Mammary epithelial cell (primary cell): ENCODE measurements at regions of chr14 and their contacts with region 1.

Region 1: GRCh38 chr14:104593241-104593701 is 11.3 kb downstream of the TMEM179 start:
- DNase-seq: no peak
- H3K4me3 ChIP-seq: no peak overlapping the region
- H3K27ac ChIP-seq: no peak overlapping the region
- H3K4me1 ChIP-seq: no peaks in the 10 kb centered on the region
- H3K27me3 ChIP-seq: no peaks in the 10 kb centered on the region
- CTCF ChIP-seq: no peak

Region 2: GRCh38 chr14:104085030-104085888 is 508.0 kb before region 1 on chr14 and contains the start of gene ASPG:
- CTCF ChIA-PET with region 1: no interaction called
- dilution Hi-C with region 1: loop called (anchors 5 kb)
- in situ Hi-C with region 1: no loop called
- intact Hi-C with region 1: no loop called
- DNase-seq: no peak
- H3K4me3 ChIP-seq: no peak within 1 kb of the TSS
- H3K27ac ChIP-seq: no peak within 1 kb of the TSS
- H3K4me1 ChIP-seq: no peaks in the 10 kb centered on the region
- H3K27me3 ChIP-seq: peaks cover 11% of the 10 kb centered on the region
- CTCF ChIP-seq: no peak
- total RNA-seq, gene ASPG: 0.09 TPM in 1 of 2 donors, not detected in the other

Region 3: DNA sequence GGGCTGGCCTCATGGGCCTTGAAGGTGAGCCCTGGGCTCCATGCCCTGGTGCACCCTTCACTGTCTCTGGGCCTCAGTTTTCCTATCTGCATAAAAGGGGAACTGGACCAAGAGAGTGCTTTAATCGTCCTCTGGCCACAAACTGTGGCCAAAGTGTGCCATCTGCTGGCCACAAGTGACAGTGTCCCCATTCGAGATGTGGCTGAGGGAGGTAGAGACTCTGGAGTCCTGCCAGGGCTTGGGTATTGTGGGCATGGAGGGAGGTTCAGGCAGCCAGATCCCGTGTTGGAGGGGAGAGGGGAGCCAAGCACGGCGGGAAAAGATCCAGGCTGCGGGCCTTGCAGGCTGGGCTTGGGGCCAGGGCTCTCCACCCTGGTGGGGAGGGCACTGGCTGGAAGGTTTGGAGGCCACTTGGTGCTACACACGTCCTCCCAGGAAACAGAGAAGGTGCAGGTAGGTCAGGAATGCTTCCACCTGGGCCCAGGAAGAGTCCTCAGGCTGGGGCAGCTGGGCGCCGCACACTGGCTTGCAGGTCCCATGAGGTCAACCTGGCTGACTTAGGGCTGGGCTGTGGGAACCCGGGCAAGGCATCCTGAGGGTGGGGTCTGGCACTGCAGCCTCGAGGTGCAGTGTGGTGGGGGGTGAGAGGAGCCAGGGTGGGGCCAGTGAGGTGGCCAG is 462.2 kb before region 1 on chr14:
- CTCF ChIA-PET with region 1: no interaction called
- dilution Hi-C with region 1: loop called (anchors 5 kb)
- in situ Hi-C with region 1: no loop called
- intact Hi-C with region 1: no loop called
- DNase-seq: no peak
- H3K4me3 ChIP-seq: no peak overlapping the region
- H3K27ac ChIP-seq: no peak overlapping the region
- H3K4me1 ChIP-seq: no peaks in the 10 kb centered on the region
- H3K27me3 ChIP-seq: peaks cover 18% of the 10 kb centered on the region
- CTCF ChIP-seq: peak; percentile 71 to 83

Region 4: GRCh38 chr14:104499784-104500760 is 93.2 kb before region 1 on chr14:
- CTCF ChIA-PET with region 1: no interaction called
- dilution Hi-C with region 1: loop called (anchors 5 kb)
- in situ Hi-C with region 1: no loop called
- intact Hi-C with region 1: no loop called
- DNase-seq: no peak
- H3K4me3 ChIP-seq: no peak overlapping the region
- H3K27ac ChIP-seq: no peak overlapping the region
- H3K4me1 ChIP-seq: no peaks in the 10 kb centered on the region
- H3K27me3 ChIP-seq: no peaks in the 10 kb centered on the region
- CTCF ChIP-seq: no peak

Region 5: DNA sequence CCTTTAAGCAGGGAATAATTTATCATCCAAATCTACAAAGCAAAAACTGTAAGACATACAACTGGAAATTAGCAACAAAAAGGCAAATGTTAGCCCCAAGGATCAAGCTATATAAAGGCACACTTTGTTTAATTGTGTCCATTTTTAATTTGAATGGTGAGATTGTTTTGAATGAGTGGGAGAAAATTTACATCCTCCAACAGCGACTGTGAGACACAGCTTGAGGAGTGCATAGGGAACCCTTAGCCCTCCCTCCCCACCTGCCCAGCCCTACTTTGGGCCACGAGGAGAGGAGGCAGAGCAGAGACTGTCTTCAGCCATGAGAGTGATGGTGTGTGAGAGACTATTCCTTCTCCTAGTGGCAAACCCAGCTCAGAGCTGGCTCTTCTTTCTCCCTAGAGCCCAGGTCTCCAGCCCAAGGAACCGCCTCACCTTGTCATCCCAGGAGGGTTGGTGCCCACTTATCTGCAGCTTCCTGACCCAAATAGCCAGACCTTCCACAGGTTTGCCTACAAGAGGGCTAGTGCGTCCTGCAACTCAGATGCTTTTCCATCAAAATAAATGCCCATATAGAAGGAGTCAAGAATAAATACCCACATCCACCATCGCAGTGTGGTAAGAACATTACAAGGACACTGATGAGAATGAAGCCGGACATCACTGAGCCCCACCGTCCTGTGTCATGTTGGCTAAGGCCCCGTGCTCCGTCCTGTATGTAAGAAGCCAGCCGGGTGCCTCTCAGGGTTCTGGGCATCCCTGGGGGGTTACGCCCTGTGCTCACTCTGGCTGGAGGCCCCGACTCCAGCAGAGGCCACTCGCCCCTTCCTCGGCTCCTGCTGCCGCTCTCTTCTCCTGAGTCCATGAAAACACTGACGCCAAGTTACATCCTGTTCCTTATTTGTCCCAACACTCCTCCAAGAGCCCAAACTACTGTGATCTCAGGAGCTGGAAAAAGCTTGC is 50.1 kb before region 1 on chr14:
- CTCF ChIA-PET with region 1: no interaction called
- dilution Hi-C with region 1: loop called (anchors 5 kb)
- in situ Hi-C with region 1: no loop called
- intact Hi-C with region 1: no loop called
- DNase-seq: no peak
- H3K4me3 ChIP-seq: no peak overlapping the region
- H3K27ac ChIP-seq: no peak overlapping the region
- H3K4me1 ChIP-seq: no peaks in the 10 kb centered on the region
- H3K27me3 ChIP-seq: peaks cover 5% of the 10 kb centered on the region
- CTCF ChIP-seq: no peak

Region 6: DNA sequence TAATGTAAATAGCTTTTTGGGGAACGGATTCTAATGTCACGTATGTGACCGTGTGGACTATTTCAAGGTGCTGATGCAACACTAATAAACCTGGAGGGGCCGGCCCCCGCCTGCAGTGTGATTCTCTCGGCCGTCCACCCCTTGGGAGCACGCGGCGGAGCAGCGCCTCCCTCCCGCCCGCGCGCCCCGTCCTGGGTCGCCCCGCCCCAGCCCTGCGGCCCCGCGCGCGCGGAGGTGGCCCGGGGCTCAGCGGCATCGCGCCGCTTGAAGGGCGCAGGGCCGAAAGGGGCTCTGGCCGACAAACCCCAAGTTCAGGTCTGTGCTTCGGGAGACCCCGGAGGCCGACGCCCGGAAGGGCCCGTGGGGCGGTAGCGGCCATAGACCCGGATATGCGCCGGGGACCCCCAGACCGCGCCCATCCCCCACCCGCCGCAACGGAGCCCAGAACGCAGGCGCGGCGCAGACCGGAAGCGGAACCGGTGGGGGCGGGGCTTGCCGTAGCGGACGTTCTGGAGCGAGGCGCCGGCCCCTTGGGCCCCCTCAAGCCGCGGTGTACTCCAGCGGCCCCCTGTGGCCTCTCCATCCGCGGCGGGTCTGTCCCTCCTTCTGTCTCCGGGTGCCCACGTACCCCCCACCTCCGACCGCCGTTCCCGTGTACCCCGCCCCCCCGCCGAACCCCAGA is 804.9 kb after region 1 on chr14 and contains the start of gene TEX22:
- CTCF ChIA-PET with region 1: no interaction called
- dilution Hi-C with region 1: no loop called
- in situ Hi-C with region 1: no loop called
- intact Hi-C with region 1: no loop called
- DNase-seq: peak; percentile 26
- H3K4me3 ChIP-seq: peak within 1 kb of the TSS; percentile 69 to 83 (median 70)
- H3K27ac ChIP-seq: peak within 1 kb of the TSS; percentile 8
- H3K4me1 ChIP-seq: peaks cover 12% of the 10 kb centered on the region
- H3K27me3 ChIP-seq: no peaks in the 10 kb centered on the region
- CTCF ChIP-seq: no peak
- total RNA-seq, gene TEX22: 0.17 to 2.3 TPM